ENCODE measurements at regions of chr17 and their contacts with region 1.

Region 1: GRCh38 chr17:74961657-74962490 is 10.7 kb downstream of the HID1 start:
- DNase-seq: peak; percentile 86 to 98
- H3K4me3 ChIP-seq: no peak overlapping the region
- CTCF ChIP-seq: peak in 1 of 3 donors; percentile 79
- POLR2A ChIP-seq: no peak

Region 2: DNA sequence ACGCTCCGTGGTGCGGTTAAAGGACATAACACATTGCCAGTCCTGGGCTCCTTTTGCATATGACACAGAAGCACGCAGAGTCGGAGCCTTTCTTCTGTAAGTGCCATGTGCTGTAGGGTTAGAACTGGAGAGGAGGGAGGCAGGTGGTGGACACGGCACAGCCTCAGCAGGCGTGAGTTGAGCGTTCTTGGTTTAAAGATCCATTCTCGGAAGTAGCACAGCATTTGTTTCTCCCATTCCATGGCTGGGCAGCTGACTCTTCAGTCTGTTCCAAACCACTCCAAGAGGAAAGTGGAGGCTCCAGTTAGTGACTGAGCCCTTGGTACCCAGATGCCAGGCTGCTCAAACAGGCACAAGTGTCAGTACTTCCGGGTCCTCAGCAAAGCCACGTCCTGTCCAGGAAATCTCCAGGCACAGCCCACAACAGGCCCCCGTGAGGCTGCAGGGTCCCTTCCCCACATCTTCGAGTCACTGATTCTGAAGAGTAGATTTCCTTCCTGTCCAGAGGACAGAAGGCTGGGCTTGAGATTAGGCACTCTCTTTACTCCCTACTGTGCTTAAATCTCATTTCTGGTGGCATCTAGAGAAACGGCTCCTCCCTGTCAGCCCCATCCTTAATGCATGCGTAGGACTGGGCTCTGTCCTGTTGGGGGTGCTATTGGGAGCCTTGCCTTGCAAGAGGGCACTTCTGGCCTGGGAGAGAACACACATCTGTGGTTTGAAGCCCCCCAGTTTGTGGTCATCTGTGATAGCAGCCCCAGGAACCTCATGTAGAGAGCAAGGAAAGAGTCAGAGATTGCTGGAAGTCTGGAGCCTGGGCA is 146.1 kb before region 1 on chr17:
- intact Hi-C with region 1: no loop called
- DNase-seq: no peak
- H3K4me3 ChIP-seq: no peak overlapping the region
- CTCF ChIP-seq: no peak
- POLR2A ChIP-seq: no peak

Region 3: GRCh38 chr17:74923533-74924249 is 38.2 kb before region 1 on chr17:
- intact Hi-C with region 1: loop called (anchors 2 kb)
- DNase-seq: peak; percentile 38 to 92
- H3K4me3 ChIP-seq: peak overlapping the region; percentile 13
- CTCF ChIP-seq: no peak
- POLR2A ChIP-seq: no peak

Region 4: DNA sequence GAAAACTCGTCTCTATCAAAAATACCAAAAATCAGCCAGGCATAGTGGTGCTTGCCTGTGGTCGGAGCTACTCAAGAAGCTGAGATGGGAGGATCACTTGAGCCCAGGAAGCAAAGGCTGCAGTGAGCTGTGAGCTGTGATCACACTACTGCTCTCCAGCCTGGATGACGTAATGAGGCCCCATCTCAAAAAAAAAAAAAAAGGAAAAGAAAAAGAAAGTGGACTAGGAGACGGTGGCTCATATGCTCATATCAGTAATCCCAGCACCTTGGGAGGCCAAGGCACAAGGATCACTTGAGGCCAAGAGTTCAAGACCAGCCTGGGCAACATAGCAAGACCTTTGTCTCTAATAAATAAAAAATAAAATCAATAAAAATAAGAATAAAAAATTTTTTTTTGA is 229.7 kb after region 1 on chr17:
- intact Hi-C with region 1: loop called (anchors 10 kb)
- DNase-seq: no peak
- H3K4me3 ChIP-seq: no peak overlapping the region
- CTCF ChIP-seq: no peak
- POLR2A ChIP-seq: no peak

Measured in lower leg skin (tissue), 4 donors.